ENCODE measurements at regions of chr1 and their contacts with region 1.

Region 1: GRCh38 chr1:229227298-229227919 is 43.5 kb upstream of the RAB4A start:
- DNase-seq: peak; percentile 92
- H3K4me3 ChIP-seq: no peak overlapping the region
- H3K27ac ChIP-seq: no peak overlapping the region
- H3K4me1 ChIP-seq: peaks cover 0 to 47% (median 22%) of the 10 kb centered on the region in 4 donors
- H3K27me3 ChIP-seq: no peaks in the 10 kb centered on the region
- CTCF ChIP-seq: peak; percentile 71 to 83 (median 79)
- EP300 ChIP-seq: peak in 1 of 4 donors; percentile 18
- POLR2A ChIP-seq: no peak

Region 2: DNA sequence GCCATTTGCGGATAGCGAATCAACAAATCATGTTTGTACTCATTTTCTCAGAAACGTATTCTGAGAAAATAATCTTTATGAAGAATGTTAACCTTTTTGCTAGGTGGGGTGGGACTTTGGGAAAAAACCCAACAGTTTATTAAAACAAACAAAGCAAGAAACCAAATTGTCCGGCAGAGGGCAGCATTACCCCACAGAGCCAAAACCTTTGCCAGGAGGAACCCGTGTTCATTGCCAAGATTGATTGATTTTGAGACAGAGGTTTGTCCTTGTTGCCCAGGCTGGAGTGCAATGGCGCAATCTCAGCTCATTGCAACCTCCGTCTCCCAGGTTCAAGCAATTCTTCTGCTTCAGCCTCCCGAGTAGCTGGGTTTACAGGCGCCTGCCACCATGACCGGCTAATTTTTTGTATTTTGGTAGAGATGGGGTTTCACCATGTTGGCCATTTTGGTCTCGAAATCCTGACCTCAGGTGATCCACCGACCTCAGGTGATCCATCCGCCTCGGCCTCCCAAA is 563.0 kb before region 1 on chr1:
- intact Hi-C with region 1: loop called (anchors 2 kb)
- DNase-seq: peak; percentile 84
- H3K4me3 ChIP-seq: no peak overlapping the region
- H3K27ac ChIP-seq: no peak overlapping the region
- H3K4me1 ChIP-seq: no peaks in the 10 kb centered on the region
- H3K27me3 ChIP-seq: peaks cover 0 to 3% (median 0%) of the 10 kb centered on the region in 3 donors
- CTCF ChIP-seq: peak; percentile 52 to 89 (median 74)
- EP300 ChIP-seq: no peak
- POLR2A ChIP-seq: no peak

Region 3: GRCh38 chr1:228804671-228805413 is 422.6 kb before region 1 on chr1:
- intact Hi-C with region 1: loop called (anchors 5 kb)
- DNase-seq: no peak
- H3K4me3 ChIP-seq: no peak overlapping the region
- H3K27ac ChIP-seq: peak overlapping the region in 3 of 4 donors; percentile 15 to 83 (median 47)
- H3K4me1 ChIP-seq: peaks cover 0 to 54% (median 45%) of the 10 kb centered on the region in 4 donors
- H3K27me3 ChIP-seq: no peaks in the 10 kb centered on the region
- CTCF ChIP-seq: no peak
- EP300 ChIP-seq: peak in 2 of 4 donors; percentile 73 to 82
- POLR2A ChIP-seq: no peak

Region 4: GRCh38 chr1:228902781-228903433 is 324.5 kb before region 1 on chr1:
- intact Hi-C with region 1: loop called (anchors 10 kb)
- DNase-seq: peak; percentile 95
- H3K4me3 ChIP-seq: no peak overlapping the region
- H3K27ac ChIP-seq: peak overlapping the region; percentile 42 to 81 (median 69)
- H3K4me1 ChIP-seq: peaks cover 0 to 46% (median 43%) of the 10 kb centered on the region in 4 donors
- H3K27me3 ChIP-seq: no peaks in the 10 kb centered on the region
- CTCF ChIP-seq: no peak
- EP300 ChIP-seq: no peak
- POLR2A ChIP-seq: no peak

Region 5: GRCh38 chr1:228989992-228990827 is 237.2 kb before region 1 on chr1:
- intact Hi-C with region 1: loop called (anchors 10 kb)
- DNase-seq: peak; percentile 93
- H3K4me3 ChIP-seq: no peak overlapping the region
- H3K27ac ChIP-seq: peak overlapping the region; percentile 15 to 82 (median 70)
- H3K4me1 ChIP-seq: peaks cover 0 to 53% (median 44%) of the 10 kb centered on the region in 4 donors
- H3K27me3 ChIP-seq: no peaks in the 10 kb centered on the region
- CTCF ChIP-seq: no peak
- EP300 ChIP-seq: peak in 3 of 4 donors; percentile 31 to 78 (median 40)
- POLR2A ChIP-seq: no peak

Region 6: DNA sequence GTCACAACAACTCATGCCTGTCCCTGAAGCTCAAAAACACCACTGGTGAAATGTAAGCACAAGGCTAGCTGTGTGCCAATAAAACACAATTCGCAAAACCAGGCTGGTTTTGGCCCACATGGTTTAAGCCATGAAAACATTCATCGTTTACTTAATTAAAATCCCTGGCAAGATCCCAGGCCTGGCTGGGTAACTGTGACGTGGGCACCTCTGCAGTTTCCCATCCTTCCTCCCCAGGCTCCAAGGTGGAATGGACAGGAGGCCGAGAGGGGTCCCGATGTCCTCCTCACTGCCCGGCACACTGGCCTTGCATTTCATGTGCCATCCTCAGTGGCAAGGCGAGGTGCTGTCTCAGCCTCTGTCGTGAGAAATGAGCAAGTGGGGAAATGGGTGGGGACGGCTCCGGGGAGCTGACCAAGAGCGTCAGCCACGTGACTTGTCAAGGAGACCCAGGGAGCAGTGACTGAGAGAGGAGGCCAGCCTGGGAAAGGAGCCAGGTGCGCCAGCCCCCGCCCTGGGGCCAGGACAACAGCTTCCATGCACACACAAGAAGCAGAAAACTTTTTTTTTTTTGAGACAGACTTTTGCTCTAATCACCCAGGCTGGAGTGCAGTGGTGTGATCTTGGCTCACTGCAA is 109.6 kb before region 1 on chr1:
- intact Hi-C with region 1: loop called (anchors 5 kb)
- DNase-seq: peak; percentile 94
- H3K4me3 ChIP-seq: no peak overlapping the region
- H3K27ac ChIP-seq: peak overlapping the region; percentile 78 to 86 (median 83)
- H3K4me1 ChIP-seq: peaks cover 0 to 79% (median 44%) of the 10 kb centered on the region in 4 donors
- H3K27me3 ChIP-seq: no peaks in the 10 kb centered on the region
- CTCF ChIP-seq: no peak
- EP300 ChIP-seq: peak in 2 of 4 donors; percentile 60 to 70
- POLR2A ChIP-seq: no peak

Region 7: GRCh38 chr1:229156872-229157271 is 70.5 kb before region 1 on chr1:
- intact Hi-C with region 1: loop called (anchors 5 kb)
- DNase-seq: peak; percentile 75
- H3K4me3 ChIP-seq: no peak overlapping the region
- H3K27ac ChIP-seq: peak overlapping the region in 1 of 4 donors; percentile 33
- H3K4me1 ChIP-seq: peaks cover 0 to 24% (median 0%) of the 10 kb centered on the region in 4 donors
- H3K27me3 ChIP-seq: no peaks in the 10 kb centered on the region
- CTCF ChIP-seq: peak; percentile 42 to 62 (median 48)
- EP300 ChIP-seq: no peak
- POLR2A ChIP-seq: no peak

Region 8: GRCh38 chr1:229440851-229441537 is 213.6 kb after region 1 on chr1:
- intact Hi-C with region 1: no loop called
- DNase-seq: no peak
- H3K4me3 ChIP-seq: no peak overlapping the region
- H3K27ac ChIP-seq: no peak overlapping the region
- H3K4me1 ChIP-seq: no peaks in the 10 kb centered on the region
- H3K27me3 ChIP-seq: no peaks in the 10 kb centered on the region
- CTCF ChIP-seq: no peak
- EP300 ChIP-seq: no peak
- POLR2A ChIP-seq: no peak

Measured in sigmoid colon (tissue), 7 donors.